Activated naive CD4-positive, alpha-beta T cell treated with anti-CD3 and anti-CD28 coated beads for 36 hours (primary cell): ENCODE measurements at regions of chr10 and their contacts with region 1.

Region 1: DNA sequence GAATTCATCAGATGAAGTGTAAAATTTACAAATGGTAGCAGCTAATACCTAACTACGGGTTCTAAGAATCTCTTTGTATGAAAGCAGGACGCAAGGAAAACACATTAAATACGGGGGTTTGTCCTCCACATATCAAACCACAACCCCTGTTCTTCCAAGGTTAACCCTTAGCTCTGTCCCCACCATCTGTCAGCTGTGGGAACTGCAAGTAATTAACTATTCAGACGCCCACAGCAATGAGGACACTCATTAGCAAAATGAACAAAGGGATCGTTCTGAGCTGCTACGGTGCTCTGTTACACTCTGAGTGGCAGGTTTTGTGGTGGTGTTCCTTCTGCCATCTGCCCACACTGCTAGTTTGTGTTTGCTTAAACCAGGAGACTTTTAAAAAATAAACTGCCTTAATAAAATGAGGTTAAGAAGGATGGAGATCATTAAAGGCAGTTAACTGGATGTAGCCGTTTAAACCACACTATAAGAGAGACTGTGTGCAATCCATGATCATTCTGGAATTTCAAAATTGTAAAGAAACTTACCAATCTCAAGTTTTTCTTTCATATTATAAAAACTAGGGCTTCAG is 51.4 kb downstream of the C10orf67 start:
- DNase-seq: peak; percentile 71
- H3K4me3 Mint-ChIP-seq: no peak overlapping the region
- H3K27ac Mint-ChIP-seq: no peak overlapping the region
- H3K4me1 Mint-ChIP-seq: peaks cover 2% of the 10 kb centered on the region
- H3K27me3 Mint-ChIP-seq: peaks cover 14% of the 10 kb centered on the region

Region 2: DNA sequence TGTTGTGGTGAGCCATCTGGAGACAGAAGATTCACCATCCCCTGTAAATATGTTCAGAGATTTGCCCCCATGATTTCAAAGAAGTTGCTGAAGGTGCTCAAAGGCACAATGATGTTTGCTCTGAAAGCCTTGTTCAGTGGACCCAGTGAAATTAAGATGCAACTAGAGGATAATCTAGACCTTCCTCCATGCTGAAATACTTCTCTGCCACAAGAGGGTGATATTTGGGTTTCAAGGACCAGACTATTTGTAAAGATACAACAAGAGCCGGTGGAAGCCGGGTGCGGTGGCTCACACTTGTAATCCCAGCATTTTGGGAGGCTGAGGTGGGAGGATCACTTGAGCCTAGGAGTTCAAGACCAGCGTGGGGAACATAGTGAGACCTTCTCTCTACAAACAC is 211.3 kb before region 1 on chr10:
- CTCF ChIA-PET with region 1: no interaction called
- intact Hi-C with region 1: loop called (anchors 5 kb)
- DNase-seq: no peak
- H3K4me3 Mint-ChIP-seq: no peak overlapping the region
- H3K27ac Mint-ChIP-seq: no peak overlapping the region
- H3K4me1 Mint-ChIP-seq: no peaks in the 10 kb centered on the region
- H3K27me3 Mint-ChIP-seq: peaks cover 21% of the 10 kb centered on the region